ENCODE measurements at regions of chr18 and their contacts with region 1.

Region 1: GRCh38 chr18:23586249-23587196 is at the start of gene NPC1:
- DNase-seq: peak; percentile 80
- ATAC-seq: peak; percentile 93
- H3K4me3 ChIP-seq: peak within 1 kb of the TSS; percentile 80 to 89
- H3K27ac ChIP-seq: peak within 1 kb of the TSS; percentile 95
- H3K4me1 ChIP-seq: peaks cover 8 to 23% of the 10 kb centered on the region in 2 experiments
- H3K27me3 ChIP-seq: no peaks in the 10 kb centered on the region
- CTCF ChIP-seq: peak; percentile 43 to 86 (median 72); a peak in 5 of 6 replicates
- POLR2A ChIP-seq: peak; percentile 52
- RAD21 ChIP-seq: peak; percentile 67
- total RNA-seq, gene NPC1: 51.6 TPM

Region 2: GRCh38 chr18:23194155-23194996 is 392.1 kb before region 1 on chr18:
- CTCF ChIA-PET with region 1: no interaction called
- POLR2A ChIA-PET with region 1: no interaction called
- RAD21 ChIA-PET with region 1: no interaction called
- intact Hi-C with region 1: no loop called
- DNase-seq: no peak
- ATAC-seq: no peak
- H3K4me3 ChIP-seq: no peak overlapping the region
- H3K27ac ChIP-seq: no peak overlapping the region
- H3K4me1 ChIP-seq: no peaks in the 10 kb centered on the region
- H3K27me3 ChIP-seq: no peaks in the 10 kb centered on the region
- CTCF ChIP-seq: no peak
- POLR2A ChIP-seq: no peak
- RAD21 ChIP-seq: no peak

Region 3: GRCh38 chr18:23452728-23453679 is 133.5 kb before region 1 on chr18 and contains the start of gene RIOK3:
- CTCF ChIA-PET with region 1: no interaction called
- POLR2A ChIA-PET with region 1: no interaction called
- RAD21 ChIA-PET with region 1: no interaction called
- intact Hi-C with region 1: loop called (anchors 2 kb)
- DNase-seq: peak; percentile 95
- ATAC-seq: peak; percentile 93
- H3K4me3 ChIP-seq: peak within 1 kb of the TSS; percentile 85 to 97
- H3K27ac ChIP-seq: peak within 1 kb of the TSS; percentile 70
- H3K4me1 ChIP-seq: peaks cover 18 to 29% of the 10 kb centered on the region in 2 experiments
- H3K27me3 ChIP-seq: no peaks in the 10 kb centered on the region
- CTCF ChIP-seq: no peak
- POLR2A ChIP-seq: peak; percentile 35
- RAD21 ChIP-seq: no peak
- total RNA-seq, gene RIOK3: 42.5 TPM

Region 4: GRCh38 chr18:23515911-23516546 is 70.5 kb before region 1 on chr18:
- CTCF ChIA-PET with region 1: no interaction called
- POLR2A ChIA-PET with region 1: no interaction called
- RAD21 ChIA-PET with region 1: no interaction called
- intact Hi-C with region 1: loop called (anchors 1 kb)
- DNase-seq: peak; percentile 57
- ATAC-seq: peak; percentile 100
- H3K4me3 ChIP-seq: no peak overlapping the region
- H3K27ac ChIP-seq: no peak overlapping the region
- H3K4me1 ChIP-seq: 0 out of 4 replicates have a peak, but pooled peaks cover 0 to 2% of the 10 kb centered on the region in 2 experiments
- H3K27me3 ChIP-seq: no peaks in the 10 kb centered on the region
- CTCF ChIP-seq: peak; percentile 72 to 96 (median 96); a peak in 5 of 6 replicates
- POLR2A ChIP-seq: no peak
- RAD21 ChIP-seq: peak; percentile 78

Region 5: GRCh38 chr18:23650968-23651927 is 64.7 kb after region 1 on chr18:
- CTCF ChIA-PET with region 1: no interaction called
- POLR2A ChIA-PET with region 1: no interaction called
- RAD21 ChIA-PET with region 1: no interaction called
- intact Hi-C with region 1: no loop called
- DNase-seq: no peak
- ATAC-seq: no peak
- H3K4me3 ChIP-seq: no peak overlapping the region
- H3K27ac ChIP-seq: no peak overlapping the region
- H3K4me1 ChIP-seq: no peaks in the 10 kb centered on the region
- H3K27me3 ChIP-seq: no peaks in the 10 kb centered on the region
- CTCF ChIP-seq: no peak
- POLR2A ChIP-seq: no peak
- RAD21 ChIP-seq: no peak

Measured in HCT116 (cell line).